ENCODE measurements at regions of chr15 and their contacts with region 1.

Region 1: DNA sequence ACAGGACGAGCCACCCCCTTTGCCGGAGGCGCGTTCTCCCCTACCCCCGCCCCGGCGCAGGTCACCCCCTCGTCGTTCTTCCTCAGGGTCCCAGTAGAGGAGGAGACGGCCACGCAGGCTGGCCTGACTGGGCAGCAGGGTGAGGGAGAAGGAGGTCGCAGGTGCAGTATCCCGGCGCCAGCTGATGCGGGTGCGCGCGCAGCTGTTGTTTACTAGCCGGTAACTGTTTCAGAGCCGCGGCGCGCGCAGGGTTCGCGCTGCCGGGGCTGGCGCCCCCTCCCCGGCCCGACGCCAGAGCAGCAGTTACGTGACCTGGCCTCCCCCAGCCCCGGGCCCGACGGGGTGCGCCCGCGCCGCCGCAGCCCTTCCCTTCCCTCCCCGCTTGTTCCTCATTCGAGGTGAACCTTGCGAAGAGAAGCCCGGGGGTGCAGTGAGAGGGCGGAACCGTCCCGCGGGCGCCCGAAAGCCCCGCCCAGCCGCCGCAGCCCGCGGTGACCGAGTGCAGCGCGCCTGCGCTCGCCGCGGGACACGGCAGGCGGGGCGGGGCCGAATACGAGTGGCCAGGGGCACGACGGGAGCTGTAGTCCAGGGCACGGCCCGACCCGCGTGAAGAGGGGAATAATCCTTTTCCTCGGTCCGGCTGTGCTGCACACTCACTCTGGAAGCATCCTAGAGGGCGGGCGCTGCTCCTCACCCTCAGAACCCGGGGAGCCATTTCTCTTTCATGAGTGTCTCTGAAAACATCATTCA is at the start of gene SLC12A6:
- DNase-seq: peak; percentile 92
- H3K4me3 Mint-ChIP-seq: peak within 1 kb of the TSS; percentile 95
- H3K27ac Mint-ChIP-seq: peak within 1 kb of the TSS; percentile 88
- H3K4me1 Mint-ChIP-seq: peaks cover 68% of the 10 kb centered on the region
- H3K27me3 Mint-ChIP-seq: no peaks in the 10 kb centered on the region
- total RNA-seq, gene SLC12A6: 18.4 to 18.5 TPM

Region 2: GRCh38 chr15:34038023-34038870 is 299.5 kb before region 1 on chr15:
- CTCF ChIA-PET with region 1: no interaction called
- POLR2A ChIA-PET with region 1: no interaction called
- intact Hi-C with region 1: loop called (anchors 2 kb)
- DNase-seq: peak; percentile 79
- H3K4me3 Mint-ChIP-seq: peak overlapping the region; percentile 85
- H3K27ac Mint-ChIP-seq: peak overlapping the region; percentile 90
- H3K4me1 Mint-ChIP-seq: peaks cover 25% of the 10 kb centered on the region
- H3K27me3 Mint-ChIP-seq: no peaks in the 10 kb centered on the region

Region 3: DNA sequence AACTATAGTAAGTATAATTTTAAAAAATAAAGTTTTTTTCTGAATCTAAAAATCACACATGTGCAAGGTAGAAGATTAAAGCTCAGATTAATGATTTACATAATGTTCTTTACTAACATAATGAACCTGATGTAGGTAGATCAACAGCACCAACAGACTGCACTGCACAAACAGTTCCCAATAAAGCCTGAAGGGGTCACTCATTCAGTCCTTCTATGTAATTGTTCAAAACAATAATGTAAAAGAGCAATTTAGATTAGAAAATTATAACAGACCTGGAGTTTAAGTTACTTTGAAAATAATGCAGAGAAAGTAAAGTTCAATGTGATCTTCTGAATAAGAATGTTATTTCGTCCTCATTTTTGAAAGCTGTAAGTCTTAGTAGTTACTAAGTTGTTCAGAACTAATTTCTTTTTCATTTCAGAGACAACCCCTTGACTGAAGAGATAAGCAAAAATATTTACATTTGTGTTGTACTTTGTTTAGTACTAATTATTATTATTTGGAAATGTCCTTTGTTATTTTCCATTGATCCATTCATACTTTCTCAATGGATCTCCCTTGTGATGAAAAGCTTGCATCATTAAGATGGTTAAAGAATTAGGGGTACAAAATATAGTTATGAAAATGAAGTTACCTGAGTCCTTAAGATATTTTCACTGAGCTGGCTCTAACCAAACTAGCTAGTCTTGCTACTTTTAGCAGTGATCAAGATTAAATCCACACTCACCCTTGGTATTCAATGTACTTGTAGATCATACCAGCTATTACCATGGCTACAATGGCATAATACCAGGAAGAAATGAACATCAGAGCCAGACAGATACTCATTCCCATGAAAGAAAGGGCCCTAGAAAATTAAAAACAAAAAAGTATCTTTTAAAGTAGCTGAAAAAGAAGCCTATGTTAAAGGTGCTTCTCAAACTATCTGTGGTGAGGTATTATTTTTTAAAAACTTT is 96.1 kb before region 1 on chr15:
- CTCF ChIA-PET with region 1: interaction called, 10 read pairs
- POLR2A ChIA-PET with region 1: no interaction called
- intact Hi-C with region 1: loop called (anchors 1 kb)
- DNase-seq: peak; percentile 31
- H3K4me3 Mint-ChIP-seq: no peak overlapping the region
- H3K27ac Mint-ChIP-seq: peak overlapping the region; percentile 64
- H3K4me1 Mint-ChIP-seq: peaks cover 38% of the 10 kb centered on the region
- H3K27me3 Mint-ChIP-seq: no peaks in the 10 kb centered on the region

Region 4: DNA sequence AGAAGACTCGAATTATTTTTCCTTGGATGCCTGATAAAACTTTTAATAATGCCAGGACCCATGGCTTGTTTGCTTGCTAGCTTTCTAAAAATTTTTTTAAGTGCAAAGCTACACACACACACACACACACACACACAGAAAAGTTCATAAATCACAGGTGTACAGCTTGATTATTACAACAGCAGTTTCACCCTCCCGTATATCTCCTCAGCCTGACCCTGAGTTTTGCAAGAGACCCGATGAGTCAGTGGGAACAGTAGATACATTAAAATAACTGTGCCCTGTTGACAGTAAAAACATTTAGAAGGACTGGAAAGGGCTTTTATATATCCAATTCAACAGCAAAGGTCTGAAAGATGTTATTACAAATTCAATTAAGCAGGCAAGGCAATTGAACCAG is 66.2 kb before region 1 on chr15:
- CTCF ChIA-PET with region 1: no interaction called
- POLR2A ChIA-PET with region 1: no interaction called
- intact Hi-C with region 1: no loop called
- DNase-seq: no peak
- H3K4me3 Mint-ChIP-seq: no peak overlapping the region
- H3K27ac Mint-ChIP-seq: no peak overlapping the region
- H3K4me1 Mint-ChIP-seq: peaks cover 2% of the 10 kb centered on the region
- H3K27me3 Mint-ChIP-seq: no peaks in the 10 kb centered on the region

Region 5: DNA sequence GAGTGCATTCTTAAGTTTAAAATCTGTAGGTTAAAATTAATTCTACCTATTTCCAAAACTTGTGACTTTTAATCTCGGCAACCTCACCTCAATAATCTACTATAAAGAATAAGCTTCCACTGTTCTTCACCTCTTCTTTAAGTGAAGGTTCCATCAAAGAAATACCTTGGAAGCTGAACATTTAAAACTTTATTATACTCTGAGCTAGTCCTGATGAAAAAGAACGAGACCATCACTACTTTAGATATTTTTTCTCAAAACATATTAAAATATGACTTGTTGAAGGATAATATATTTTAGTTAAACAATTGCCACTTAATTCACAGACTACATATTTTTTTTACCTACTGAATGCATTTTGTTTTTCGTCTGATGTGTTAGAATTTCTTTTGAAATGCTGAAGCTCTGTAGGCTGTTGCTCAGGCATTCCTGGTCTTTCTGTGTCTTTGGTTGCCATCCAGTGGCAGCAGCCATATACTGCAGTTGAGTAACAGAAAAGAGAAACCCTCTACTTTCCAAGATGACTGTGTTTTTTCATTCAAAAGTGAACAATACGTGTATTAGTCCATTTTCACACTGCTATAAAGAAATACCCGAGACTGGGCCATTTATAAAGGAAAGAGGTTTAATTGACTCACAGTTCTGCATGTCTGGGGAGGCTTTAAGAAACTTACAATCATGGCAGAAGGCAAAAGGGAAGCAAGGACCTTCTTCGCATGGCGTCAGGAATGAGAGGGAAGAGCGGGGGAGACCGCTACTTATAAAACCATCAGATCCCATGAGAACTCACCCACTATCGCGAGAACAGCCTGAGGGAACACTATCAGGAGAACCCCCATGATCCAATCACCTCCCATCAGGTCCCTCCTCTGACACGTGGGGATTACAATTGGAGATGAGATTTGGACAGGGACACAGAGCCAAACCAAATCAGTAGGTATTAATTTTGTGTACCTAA is 250.3 kb after region 1 on chr15:
- CTCF ChIA-PET with region 1: interaction called, 15 read pairs
- POLR2A ChIA-PET with region 1: interaction called, 3 read pairs
- intact Hi-C with region 1: loop called (anchors 2 kb)
- DNase-seq: peak; percentile 77
- H3K4me3 Mint-ChIP-seq: peak overlapping the region; percentile 76
- H3K27ac Mint-ChIP-seq: peak overlapping the region; percentile 65
- H3K4me1 Mint-ChIP-seq: peaks cover 13% of the 10 kb centered on the region
- H3K27me3 Mint-ChIP-seq: no peaks in the 10 kb centered on the region

Region 6: DNA sequence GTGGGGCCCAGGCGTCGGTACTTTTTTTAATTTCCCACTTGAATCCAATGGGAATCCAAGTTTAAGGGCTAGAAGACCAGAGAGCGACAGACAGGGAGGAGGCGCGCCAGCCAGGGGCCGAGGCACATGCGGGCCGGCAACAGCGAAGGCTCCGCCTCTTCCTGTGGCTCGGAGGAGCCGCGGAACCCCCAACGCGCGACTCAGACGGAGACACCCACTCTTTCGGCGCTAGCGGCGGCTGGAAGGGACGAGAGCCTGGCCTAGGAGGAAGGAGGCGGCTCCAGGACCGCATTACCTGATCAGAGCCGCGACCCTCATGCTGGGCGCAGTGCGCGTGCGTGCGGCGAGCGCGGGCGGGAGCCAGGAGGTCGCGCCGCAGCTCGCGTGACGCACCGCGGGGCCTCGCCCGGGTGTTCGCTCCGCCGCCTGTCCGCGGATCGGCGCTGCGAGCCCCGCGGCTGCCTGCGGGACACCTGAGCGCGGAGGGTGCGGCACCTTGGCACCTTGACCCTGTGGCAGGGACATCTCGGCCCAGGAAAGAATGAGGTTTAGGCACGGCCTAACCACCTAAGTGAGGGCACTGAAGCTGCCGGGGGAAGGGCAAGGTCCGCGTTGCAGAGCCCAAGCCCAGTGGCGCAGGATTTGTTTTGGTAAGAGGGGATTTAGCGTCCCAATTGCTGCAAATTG is 1208.2 kb after region 1 on chr15 and contains the start of gene DPH6:
- CTCF ChIA-PET with region 1: no interaction called
- POLR2A ChIA-PET with region 1: no interaction called
- intact Hi-C with region 1: loop called (anchors 10 kb)
- DNase-seq: peak; percentile 85
- H3K4me3 Mint-ChIP-seq: peak within 1 kb of the TSS; percentile 94
- H3K27ac Mint-ChIP-seq: peak within 1 kb of the TSS; percentile 94
- H3K4me1 Mint-ChIP-seq: peaks cover 18% of the 10 kb centered on the region
- H3K27me3 Mint-ChIP-seq: no peaks in the 10 kb centered on the region
- total RNA-seq, gene DPH6: 14.3 to 15.9 TPM

Measured in activated CD4-positive, alpha-beta memory T cell treated with anti-CD3 and anti-CD28 coated beads for 36 hours (primary cell).